Testis (tissue), 5 donors: ENCODE measurements at regions of chr21 and their contacts with region 1.

Region 1: DNA sequence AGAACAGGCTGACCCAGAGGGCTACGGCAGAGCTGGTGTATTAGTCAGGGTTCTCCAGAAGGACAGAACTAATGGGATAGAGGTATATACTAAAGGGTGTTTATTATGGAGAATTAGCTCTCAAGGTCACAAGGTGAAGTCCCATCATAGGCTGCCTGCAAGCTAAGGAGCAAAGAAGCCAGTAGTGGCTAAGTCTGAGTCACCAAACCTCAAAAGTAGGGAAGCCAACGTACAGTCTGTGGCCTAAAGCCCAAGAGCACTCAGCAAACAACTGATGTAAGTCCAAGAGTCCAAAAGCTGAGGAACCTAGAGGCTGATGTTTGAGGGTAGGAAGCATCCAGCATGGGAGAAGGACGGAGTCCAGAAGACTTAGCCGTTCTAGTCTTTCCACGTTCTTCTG is 179.2 kb downstream of the BACH1 start:
- DNase-seq: no peak
- H3K4me3 ChIP-seq: no peak overlapping the region
- H3K27ac ChIP-seq: no peak overlapping the region
- H3K4me1 ChIP-seq: no peaks in the 10 kb centered on the region
- H3K27me3 ChIP-seq: no peaks in the 10 kb centered on the region
- CTCF ChIP-seq: no peak
- POLR2A ChIP-seq: no peak

Region 2: GRCh38 chr21:29298348-29299045 is 179.4 kb before region 1 on chr21 and contains the start of gene BACH1:
- intact Hi-C with region 1: no loop called
- DNase-seq: peak; percentile 92
- H3K4me3 ChIP-seq: peak within 1 kb of the TSS; percentile 82 to 92
- H3K27ac ChIP-seq: peak within 1 kb of the TSS; percentile 85 to 93
- H3K4me1 ChIP-seq: peaks cover 25% of the 10 kb centered on the region
- H3K27me3 ChIP-seq: no peaks in the 10 kb centered on the region
- CTCF ChIP-seq: peak in 1 of 3 experiments; percentile 13
- POLR2A ChIP-seq: peak; percentile 69
- total RNA-seq, gene BACH1: 41.9 to 57.7 TPM

Region 3: DNA sequence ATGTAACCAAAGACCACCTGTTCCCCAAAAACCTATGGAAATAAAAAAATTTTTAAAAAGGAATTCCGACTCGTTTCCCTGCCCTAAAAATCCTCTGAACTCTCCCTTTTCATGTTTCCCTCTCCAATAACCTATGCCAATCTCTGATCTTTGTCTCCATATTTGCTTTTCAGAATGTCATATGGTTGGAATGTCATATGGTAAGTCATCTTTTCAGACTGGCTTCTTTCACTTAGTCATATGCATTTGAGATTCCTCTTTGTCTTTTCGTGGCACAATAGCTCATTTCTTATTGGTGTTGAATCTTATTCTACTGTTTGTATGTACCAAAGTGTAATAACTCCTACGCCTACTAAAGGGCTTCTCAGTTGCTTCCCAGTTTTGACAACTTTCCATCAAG is 61.7 kb before region 1 on chr21:
- intact Hi-C with region 1: no loop called
- DNase-seq: no peak
- H3K4me3 ChIP-seq: no peak overlapping the region
- H3K27ac ChIP-seq: no peak overlapping the region
- H3K4me1 ChIP-seq: no peaks in the 10 kb centered on the region
- H3K27me3 ChIP-seq: no peaks in the 10 kb centered on the region
- CTCF ChIP-seq: no peak
- POLR2A ChIP-seq: no peak

Region 4: GRCh38 chr21:29849735-29850176 is 371.8 kb after region 1 on chr21:
- intact Hi-C with region 1: loop called (anchors 10 kb)
- DNase-seq: peak; percentile 76
- H3K4me3 ChIP-seq: no peak overlapping the region
- H3K27ac ChIP-seq: no peak overlapping the region
- H3K4me1 ChIP-seq: no peaks in the 10 kb centered on the region
- H3K27me3 ChIP-seq: no peaks in the 10 kb centered on the region
- CTCF ChIP-seq: peak; percentile 22 to 61 (median 53)
- POLR2A ChIP-seq: no peak